ENCODE measurements at regions of chr14 and their contacts with region 1.

Region 1: GRCh38 chr14:64478634-64479250 is 13.4 kb downstream of the AKAP5 start:
- DNase-seq: no peak
- H3K4me3 ChIP-seq: no peak overlapping the region
- H3K27me3 ChIP-seq: no peaks in the 10 kb centered on the region
- CTCF ChIP-seq: 0 out of 2 replicates have a peak, but pooled peaks have one; percentile 15

Region 2: GRCh38 chr14:64338616-64339316 is 140.0 kb before region 1 on chr14:
- CTCF ChIA-PET with region 1: interaction called, 80 read pairs
- POLR2A ChIA-PET with region 1: no interaction called
- DNase-seq: peak; percentile 93
- H3K4me3 ChIP-seq: peak overlapping the region; percentile 56
- H3K27me3 ChIP-seq: no peaks in the 10 kb centered on the region
- CTCF ChIP-seq: no peak

Region 3: GRCh38 chr14:64465191-64465822 is 13.4 kb before region 1 on chr14 and contains the start of gene AKAP5:
- CTCF ChIA-PET with region 1: interaction called, 14 read pairs
- POLR2A ChIA-PET with region 1: no interaction called
- DNase-seq: no peak
- H3K4me3 ChIP-seq: peak within 1 kb of the TSS; percentile 74
- H3K27me3 ChIP-seq: no peaks in the 10 kb centered on the region
- CTCF ChIP-seq: no peak
- polyA plus RNA-seq, gene AKAP5: 0.17 and 0.40 TPM in 2 replicates

Region 4: DNA sequence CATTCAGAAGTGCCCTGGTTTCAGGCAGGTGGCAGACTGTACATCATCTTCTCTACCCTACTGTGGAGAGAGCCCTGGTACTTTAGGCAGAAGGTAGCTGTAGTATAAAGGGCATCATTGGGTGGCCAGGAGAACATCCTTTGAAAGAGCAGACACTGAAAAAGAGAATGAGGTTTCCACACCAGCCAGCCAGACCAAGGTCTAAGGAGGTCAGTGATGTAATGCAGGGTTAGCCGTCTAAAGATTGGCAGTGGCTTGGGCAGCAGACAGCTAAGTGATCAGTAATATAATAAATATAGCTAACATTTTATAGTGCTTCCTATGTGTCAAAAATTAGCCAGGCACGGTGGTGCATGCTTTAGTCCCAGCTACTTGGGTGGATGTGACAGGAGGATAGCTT is 12.9 kb after region 1 on chr14:
- CTCF ChIA-PET with region 1: interaction called, 13 read pairs
- POLR2A ChIA-PET with region 1: no interaction called
- DNase-seq: no peak
- H3K4me3 ChIP-seq: no peak overlapping the region
- H3K27me3 ChIP-seq: no peaks in the 10 kb centered on the region
- CTCF ChIP-seq: no peak

Region 5: DNA sequence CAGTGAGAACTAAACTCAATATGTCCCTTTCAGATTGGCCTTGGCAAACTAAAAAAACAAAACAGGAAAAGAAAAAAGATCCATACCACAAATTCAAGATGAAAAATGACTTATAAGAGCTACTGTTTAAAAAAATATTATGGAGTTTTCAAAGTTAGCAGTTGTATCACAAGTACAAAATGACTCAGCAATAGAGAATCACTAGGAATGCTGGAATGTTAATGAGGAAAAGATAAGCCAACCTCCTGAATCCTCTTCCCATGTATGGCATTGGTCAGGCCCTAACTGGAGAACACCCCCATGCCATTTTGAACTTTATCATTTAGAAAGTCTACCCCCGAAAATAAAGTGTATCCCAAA is 133.3 kb after region 1 on chr14:
- CTCF ChIA-PET with region 1: no interaction called
- POLR2A ChIA-PET with region 1: no interaction called
- DNase-seq: peak; percentile 51
- H3K4me3 ChIP-seq: no peak overlapping the region
- H3K27me3 ChIP-seq: no peaks in the 10 kb centered on the region
- CTCF ChIP-seq: no peak

Region 6: GRCh38 chr14:64654246-64654900 is 175.6 kb after region 1 on chr14:
- CTCF ChIA-PET with region 1: no interaction called
- POLR2A ChIA-PET with region 1: no interaction called
- DNase-seq: peak; percentile 63
- H3K4me3 ChIP-seq: no peak overlapping the region
- H3K27me3 ChIP-seq: no peaks in the 10 kb centered on the region
- CTCF ChIP-seq: no peak